Activated T-helper 2 cell treated with anti-CD3 and anti-CD28 coated beads, Interferon-gamma antibody, Interleukin-2, Interleukin-4, amounts not matched to agents 10 μg/mL and 5 μg/mL and 100 μg/mL, durations not matched to agents 14 hours and 24 hours and 36 hours (primary cell): ENCODE measurements at regions of chr15 and their contacts with region 1.

Region 1: GRCh38 chr15:50134520-50135024 is 15.5 kb upstream of the ATP8B4 start:
- DNase-seq: no peak
- H3K4me3 Mint-ChIP-seq: peak overlapping the region; percentile 41
- H3K27ac Mint-ChIP-seq: peak overlapping the region; percentile 91
- H3K4me1 Mint-ChIP-seq: peaks cover 61% of the 10 kb centered on the region
- H3K27me3 Mint-ChIP-seq: no peaks in the 10 kb centered on the region

Region 2: GRCh38 chr15:48925714-48926223 is 1208.8 kb before region 1 on chr15:
- intact Hi-C with region 1: loop called (anchors 5 kb)
- DNase-seq: no peak
- H3K4me3 Mint-ChIP-seq: peak overlapping the region; percentile 30
- H3K27ac Mint-ChIP-seq: peak overlapping the region; percentile 97
- H3K4me1 Mint-ChIP-seq: peaks cover 74% of the 10 kb centered on the region
- H3K27me3 Mint-ChIP-seq: no peaks in the 10 kb centered on the region

Region 3: DNA sequence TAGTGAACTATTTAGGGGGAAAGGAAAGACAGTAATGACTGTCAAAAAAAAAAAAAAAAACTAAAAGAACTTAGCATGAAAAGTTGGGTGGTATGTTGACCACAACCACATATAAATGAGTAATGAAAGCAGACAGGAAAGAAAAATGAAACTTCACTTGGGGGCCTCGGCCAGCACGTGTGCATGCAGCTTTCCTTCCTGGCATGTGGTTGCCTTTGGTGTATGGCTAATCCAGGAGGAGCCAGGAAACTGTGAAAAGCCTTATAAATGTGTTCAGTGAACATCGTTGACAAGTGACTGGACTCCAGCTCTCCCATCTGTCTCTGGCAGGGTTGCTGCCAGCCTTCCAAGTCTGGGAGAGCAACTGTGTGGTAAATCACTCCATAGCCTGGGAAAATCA is 318.6 kb before region 1 on chr15:
- intact Hi-C with region 1: loop called (anchors 10 kb)
- DNase-seq: no peak
- H3K4me3 Mint-ChIP-seq: no peak overlapping the region
- H3K27ac Mint-ChIP-seq: no peak overlapping the region
- H3K4me1 Mint-ChIP-seq: peaks cover 22% of the 10 kb centered on the region
- H3K27me3 Mint-ChIP-seq: peaks cover 2% of the 10 kb centered on the region

Region 4: DNA sequence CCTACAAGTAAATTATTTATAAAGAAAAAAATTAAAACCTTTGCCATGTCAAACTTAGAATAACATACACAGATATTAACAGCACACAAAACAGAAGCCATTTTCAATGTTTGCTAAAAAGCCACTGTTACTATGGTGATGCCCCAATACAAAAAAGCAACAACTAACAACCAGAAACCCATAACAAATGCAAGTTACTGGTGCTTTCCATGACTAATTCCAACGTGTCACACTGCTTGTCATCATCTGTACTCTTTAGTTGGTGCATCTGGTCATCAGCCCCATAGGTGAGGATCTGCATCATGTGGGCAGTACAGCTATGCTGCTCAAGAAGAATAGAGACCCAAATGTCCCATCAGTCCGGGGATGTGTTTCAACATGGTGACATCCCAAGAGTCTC is 68.4 kb before region 1 on chr15:
- intact Hi-C with region 1: loop called (anchors 1 kb)
- DNase-seq: peak; percentile 30
- H3K4me3 Mint-ChIP-seq: peak overlapping the region; percentile 18
- H3K27ac Mint-ChIP-seq: peak overlapping the region; percentile 95
- H3K4me1 Mint-ChIP-seq: peaks cover 58% of the 10 kb centered on the region
- H3K27me3 Mint-ChIP-seq: no peaks in the 10 kb centered on the region

Region 5: GRCh38 chr15:50116473-50116872 is 18.1 kb before region 1 on chr15:
- intact Hi-C with region 1: loop called (anchors 1 kb)
- DNase-seq: no peak
- H3K4me3 Mint-ChIP-seq: peak overlapping the region; percentile 80
- H3K27ac Mint-ChIP-seq: peak overlapping the region; percentile 75
- H3K4me1 Mint-ChIP-seq: peaks cover 60% of the 10 kb centered on the region
- H3K27me3 Mint-ChIP-seq: no peaks in the 10 kb centered on the region

Region 6: GRCh38 chr15:50247819-50248655 is 113.5 kb after region 1 on chr15:
- intact Hi-C with region 1: loop called (anchors 2 kb)
- DNase-seq: peak; percentile 62
- H3K4me3 Mint-ChIP-seq: peak overlapping the region; percentile 82
- H3K27ac Mint-ChIP-seq: peak overlapping the region; percentile 99
- H3K4me1 Mint-ChIP-seq: peaks cover 68% of the 10 kb centered on the region
- H3K27me3 Mint-ChIP-seq: no peaks in the 10 kb centered on the region